ENCODE measurements at regions of chr20 and their contacts with region 1.

Region 1: DNA sequence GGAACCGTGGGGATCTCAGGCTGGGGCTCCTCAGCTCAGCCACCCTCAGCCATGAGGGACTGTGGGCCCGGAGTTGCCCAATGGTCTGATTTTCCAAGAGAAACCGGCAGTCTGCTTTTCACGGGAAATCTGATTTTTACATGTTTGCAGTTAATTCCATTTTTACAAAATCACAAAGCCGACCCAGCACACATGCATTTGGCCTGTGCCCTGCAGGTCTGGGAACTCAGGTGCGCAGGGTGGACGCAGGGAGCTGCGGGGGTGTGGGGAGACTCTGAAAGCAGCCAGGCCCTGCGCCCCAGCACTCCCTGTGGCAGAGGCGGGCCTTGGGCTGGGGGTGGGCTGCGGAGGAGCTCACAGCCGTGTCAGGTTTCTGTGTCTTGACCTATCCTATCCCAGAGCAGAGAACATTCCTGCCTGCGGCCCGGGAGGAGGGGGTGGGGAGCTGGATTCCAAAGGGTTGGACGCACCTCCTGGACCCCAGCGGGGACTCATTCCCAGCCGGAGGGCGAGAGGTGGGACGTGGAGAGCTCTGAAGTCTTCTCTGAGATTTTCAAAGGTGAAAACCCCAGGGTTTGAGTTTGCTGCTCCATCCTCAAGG is 60.6 kb downstream of the ADNP start:
- DNase-seq: no peak
- ATAC-seq: no peak
- H3K4me3 ChIP-seq: no peak overlapping the region
- H3K4me3 Mint-ChIP-seq: no peak overlapping the region
- H3K27ac ChIP-seq: no peak overlapping the region
- H3K27ac Mint-ChIP-seq: peak overlapping the region; percentile 50
- H3K4me1 ChIP-seq: peaks cover 10 to 32% of the 10 kb centered on the region in 2 donors
- H3K4me1 Mint-ChIP-seq: peaks cover 24% of the 10 kb centered on the region
- H3K27me3 ChIP-seq: no peaks in the 10 kb centered on the region
- H3K27me3 Mint-ChIP-seq: no peaks in the 10 kb centered on the region
- CTCF ChIP-seq: no peak

Region 2: DNA sequence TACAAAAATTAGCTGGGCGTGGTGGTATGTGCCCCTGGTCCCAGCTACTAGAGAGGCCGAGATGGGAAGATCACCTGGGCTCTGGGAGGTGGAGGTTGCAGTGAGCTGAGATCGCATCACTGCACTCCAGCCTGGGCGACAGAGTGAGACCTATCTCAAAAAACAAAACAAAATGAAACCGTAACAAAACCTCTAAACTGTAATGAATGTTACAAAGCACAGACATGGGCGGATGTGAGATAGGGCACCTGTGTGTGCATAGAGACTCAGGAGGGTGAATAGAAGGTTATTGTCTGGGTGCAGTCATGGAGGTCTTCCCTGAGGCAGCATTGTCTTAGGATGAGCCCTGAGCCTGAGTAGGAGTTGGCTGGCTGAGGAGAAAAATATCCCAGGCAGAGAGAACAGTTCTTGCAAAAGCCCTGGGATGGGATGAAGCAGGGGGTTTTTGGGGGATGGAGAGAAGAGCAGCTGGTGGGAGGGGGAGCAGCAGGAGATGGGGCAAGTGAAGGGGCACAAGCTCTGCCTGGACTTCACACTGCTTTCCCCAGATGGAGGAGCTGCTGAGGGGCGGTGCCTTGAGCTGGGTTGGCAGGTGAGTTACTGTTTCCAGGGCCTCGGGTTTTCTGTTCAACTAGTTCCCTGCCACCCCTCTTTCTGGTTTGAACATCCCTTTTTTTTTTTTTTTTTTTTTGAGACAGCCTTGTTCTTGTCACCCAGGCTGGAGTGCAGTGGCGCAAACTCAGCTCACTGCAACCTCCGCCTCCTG is 70.6 kb before region 1 on chr20:
- CTCF ChIA-PET with region 1: interaction called, 16 read pairs
- POLR2A ChIA-PET with region 1: no interaction called
- intact Hi-C with region 1: no loop called
- DNase-seq: peak; percentile 62
- ATAC-seq: peak; percentile 52
- H3K4me3 ChIP-seq: peak overlapping the region in 3 of 5 experiments; percentile 8 to 21 (median 15)
- H3K4me3 Mint-ChIP-seq: peak overlapping the region; percentile 83
- H3K27ac ChIP-seq: peak overlapping the region; percentile 77 to 83
- H3K27ac Mint-ChIP-seq: peak overlapping the region; percentile 98
- H3K4me1 ChIP-seq: peaks cover 51 to 68% of the 10 kb centered on the region in 2 donors
- H3K4me1 Mint-ChIP-seq: peaks cover 64% of the 10 kb centered on the region
- H3K27me3 ChIP-seq: no peaks in the 10 kb centered on the region
- H3K27me3 Mint-ChIP-seq: no peaks in the 10 kb centered on the region
- CTCF ChIP-seq: no peak

Region 3: GRCh38 chr20:51095633-51096513 is 225.2 kb after region 1 on chr20:
- CTCF ChIA-PET with region 1: no interaction called
- POLR2A ChIA-PET with region 1: no interaction called
- intact Hi-C with region 1: no loop called
- DNase-seq: peak; percentile 48
- ATAC-seq: no peak
- H3K4me3 ChIP-seq: no peak overlapping the region
- H3K4me3 Mint-ChIP-seq: no peak overlapping the region
- H3K27ac ChIP-seq: peak overlapping the region in 1 of 2 donors; percentile 55
- H3K27ac Mint-ChIP-seq: peak overlapping the region; percentile 50
- H3K4me1 ChIP-seq: peaks cover 97% of the 10 kb centered on the region in 2 donors
- H3K4me1 Mint-ChIP-seq: peaks cover 84% of the 10 kb centered on the region
- H3K27me3 ChIP-seq: peaks cover 0 to 10% (median 4%) of the 10 kb centered on the region in 4 experiments
- H3K27me3 Mint-ChIP-seq: peaks cover 16% of the 10 kb centered on the region
- CTCF ChIP-seq: no peak